AG04450 (cell line): ENCODE measurements at regions of chr2 and their contacts with region 1.

Region 1: GRCh38 chr2:234881413-234882241 is 70.2 kb upstream of the SH3BP4 start:
- DNase-seq: peak; percentile 92
- H3K4me3 ChIP-seq: peak overlapping the region; percentile 29
- H3K27ac ChIP-seq: peak overlapping the region; percentile 40
- H3K27me3 ChIP-seq: no peaks in the 10 kb centered on the region
- CTCF ChIP-seq: peak; percentile 89

Region 2: DNA sequence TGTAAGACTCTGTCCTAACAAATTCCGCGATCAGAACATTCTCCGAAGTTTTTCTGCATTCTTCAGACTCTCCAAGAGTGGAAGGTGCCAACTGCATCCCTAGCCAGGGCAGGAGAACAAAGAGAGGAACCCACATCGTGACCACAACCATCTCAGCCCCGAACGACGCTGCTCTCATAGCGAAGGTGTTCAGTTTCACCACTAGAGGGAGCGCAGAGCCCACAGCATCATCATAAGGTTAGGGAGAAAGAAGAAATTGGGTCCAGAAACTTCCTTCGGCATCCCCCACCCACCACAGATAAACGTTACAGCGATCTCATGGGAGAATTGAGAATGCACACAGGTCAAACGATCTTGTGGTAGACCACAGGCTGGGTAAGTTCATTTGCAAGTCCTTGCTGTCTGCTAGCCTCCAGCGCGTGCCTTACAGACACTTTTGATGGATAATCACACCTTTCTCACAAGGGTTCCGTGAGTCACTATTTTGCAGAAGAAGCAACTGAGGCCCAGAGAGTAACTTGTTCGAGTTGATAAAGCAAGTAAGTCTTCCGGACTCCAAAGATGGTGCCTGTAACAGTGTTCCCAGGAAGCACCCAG is 331.0 kb before region 1 on chr2:
- CTCF ChIA-PET with region 1: interaction called, 11 read pairs
- POLR2A ChIA-PET with region 1: no interaction called
- DNase-seq: peak; percentile 78
- H3K4me3 ChIP-seq: no peak overlapping the region
- H3K27ac ChIP-seq: no peak overlapping the region
- H3K27me3 ChIP-seq: no peaks in the 10 kb centered on the region
- CTCF ChIP-seq: peak; percentile 97

Region 3: GRCh38 chr2:234632527-234633391 is 248.9 kb before region 1 on chr2:
- CTCF ChIA-PET with region 1: interaction called, 4 read pairs
- POLR2A ChIA-PET with region 1: interaction called, 10 read pairs
- DNase-seq: peak; percentile 98
- H3K4me3 ChIP-seq: no peak overlapping the region
- H3K27ac ChIP-seq: peak overlapping the region; percentile 96
- H3K27me3 ChIP-seq: no peaks in the 10 kb centered on the region
- CTCF ChIP-seq: no peak

Region 4: DNA sequence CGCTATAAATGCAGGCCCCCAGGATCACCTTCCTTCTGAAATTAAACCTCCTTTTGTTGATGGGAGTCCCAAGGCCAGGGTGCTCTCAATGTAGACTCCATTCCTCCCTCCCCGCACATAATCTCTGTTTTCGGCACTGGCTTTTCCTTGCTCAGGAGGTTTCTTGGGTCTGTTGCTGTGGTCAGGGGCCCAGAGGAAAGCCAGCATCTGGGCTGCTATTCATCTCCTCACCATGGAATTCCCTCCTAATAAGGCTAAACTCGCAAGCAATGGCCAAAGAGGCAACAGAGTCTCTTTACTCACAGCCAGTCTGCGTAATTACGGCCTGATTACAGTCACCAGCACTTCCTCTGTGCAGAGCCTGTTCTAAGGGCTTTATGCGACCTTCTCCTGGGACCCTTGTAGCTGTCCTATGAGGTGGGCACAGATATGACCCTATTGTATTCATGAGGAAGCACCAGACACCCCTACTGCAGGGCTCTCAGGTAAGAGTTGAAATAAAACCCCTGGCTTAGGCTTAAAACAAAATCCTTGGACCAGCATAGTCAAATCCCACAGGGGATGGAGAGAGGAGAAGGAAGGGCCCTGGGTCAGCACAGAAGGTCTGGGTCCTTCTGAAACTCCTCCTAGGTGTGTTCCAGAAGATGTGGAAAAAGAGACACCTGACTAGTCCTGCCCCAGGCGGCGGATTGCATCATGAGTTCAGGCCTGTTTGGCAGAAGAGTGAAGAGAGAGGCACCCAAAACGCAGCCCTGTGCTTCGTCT is 34.8 kb before region 1 on chr2:
- CTCF ChIA-PET with region 1: no interaction called
- POLR2A ChIA-PET with region 1: no interaction called
- DNase-seq: no peak
- H3K4me3 ChIP-seq: no peak overlapping the region
- H3K27ac ChIP-seq: no peak overlapping the region
- H3K27me3 ChIP-seq: no peaks in the 10 kb centered on the region
- CTCF ChIP-seq: no peak

Region 5: DNA sequence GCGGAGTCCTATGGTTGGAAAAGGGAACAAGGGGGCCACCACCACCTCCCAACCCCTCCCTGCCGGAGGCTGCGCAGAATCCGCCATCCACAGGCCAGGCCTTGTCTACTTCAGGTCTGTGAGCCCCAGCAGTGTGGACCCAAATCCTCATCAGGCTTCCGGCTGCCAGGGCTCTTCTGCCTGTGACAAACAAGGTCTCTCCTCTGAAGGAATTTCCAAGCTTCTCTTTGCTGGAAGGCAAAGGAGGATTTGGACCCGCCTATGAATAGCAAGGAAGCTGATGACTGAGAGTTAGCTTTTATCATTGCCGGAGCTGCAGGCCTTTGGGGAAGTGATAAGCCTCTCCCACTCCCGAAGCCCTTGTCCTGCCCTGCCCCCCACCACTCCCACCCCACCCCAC is 23.5 kb before region 1 on chr2:
- CTCF ChIA-PET with region 1: interaction called, 17 read pairs
- POLR2A ChIA-PET with region 1: no interaction called
- DNase-seq: no peak
- H3K4me3 ChIP-seq: no peak overlapping the region
- H3K27ac ChIP-seq: no peak overlapping the region
- H3K27me3 ChIP-seq: no peaks in the 10 kb centered on the region
- CTCF ChIP-seq: no peak

Region 6: DNA sequence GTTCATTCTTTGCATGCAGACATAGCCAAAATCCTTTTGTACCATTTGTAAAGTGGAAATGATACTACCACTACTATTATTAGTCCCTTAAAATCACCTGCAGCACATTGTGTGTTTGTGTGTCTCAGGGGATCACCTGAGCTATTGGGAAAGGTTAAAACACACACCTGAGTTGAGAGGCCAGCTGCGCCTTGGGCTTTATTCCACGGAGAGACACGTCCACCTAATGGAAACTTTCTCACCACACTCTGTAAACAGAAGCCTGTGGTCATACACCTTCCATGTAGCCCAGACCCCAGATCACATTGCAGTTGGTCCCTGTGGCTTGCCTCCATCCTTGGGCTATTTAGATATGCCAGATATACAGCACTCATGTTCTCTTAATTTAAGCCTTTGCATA is 11.7 kb before region 1 on chr2:
- CTCF ChIA-PET with region 1: interaction called, 16 read pairs
- POLR2A ChIA-PET with region 1: no interaction called
- DNase-seq: no peak
- H3K4me3 ChIP-seq: no peak overlapping the region
- H3K27ac ChIP-seq: no peak overlapping the region
- H3K27me3 ChIP-seq: no peaks in the 10 kb centered on the region
- CTCF ChIP-seq: no peak

Region 7: DNA sequence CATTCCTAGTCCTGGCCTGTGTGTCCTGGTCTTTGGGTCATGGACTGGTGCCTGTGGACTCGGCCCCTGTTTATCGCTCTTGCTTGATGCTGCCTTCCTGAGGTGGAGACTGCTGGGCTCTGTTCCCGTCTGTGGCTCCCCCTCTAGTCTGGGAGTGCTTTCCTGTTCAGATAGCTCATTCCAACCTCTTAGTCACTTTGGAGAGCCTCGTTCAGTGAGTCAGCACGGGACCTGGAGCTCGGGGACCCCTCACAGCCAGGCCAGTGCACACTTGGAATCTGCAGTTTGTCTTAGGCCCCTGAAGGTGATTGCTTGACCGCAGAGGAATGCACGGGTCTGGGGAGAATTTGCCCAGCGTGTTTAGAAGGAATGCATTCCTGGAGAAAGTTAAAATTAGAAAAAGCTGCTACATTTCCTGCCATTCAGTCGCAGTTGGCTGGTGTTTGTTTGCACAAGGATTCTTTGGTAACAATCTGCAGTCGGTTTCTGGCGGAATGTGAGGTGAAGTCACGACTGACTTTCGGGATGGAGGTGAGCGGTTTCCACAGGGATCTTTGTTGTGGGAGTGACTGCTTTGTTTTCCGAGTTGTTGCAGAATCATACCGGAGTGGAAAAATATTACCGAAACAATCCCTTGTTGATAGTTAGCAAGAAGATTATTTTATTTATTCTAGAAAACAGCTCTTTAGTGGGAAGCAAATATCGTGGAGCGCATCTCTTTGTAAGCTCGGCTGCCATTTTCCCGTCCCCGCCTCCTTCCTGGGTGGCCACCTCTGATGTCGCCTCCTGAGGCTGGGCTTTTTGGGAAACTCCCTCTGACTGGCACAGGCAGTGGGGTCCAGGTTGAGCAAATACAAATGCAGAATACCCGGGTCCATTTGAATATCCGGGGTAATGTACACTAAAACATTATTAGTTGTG is 99.8 kb after region 1 on chr2:
- CTCF ChIA-PET with region 1: no interaction called
- POLR2A ChIA-PET with region 1: interaction called, 14 read pairs
- DNase-seq: peak; percentile 97
- H3K4me3 ChIP-seq: peak overlapping the region; percentile 39
- H3K27ac ChIP-seq: peak overlapping the region; percentile 93
- H3K27me3 ChIP-seq: no peaks in the 10 kb centered on the region
- CTCF ChIP-seq: peak; percentile 38

Region 8: DNA sequence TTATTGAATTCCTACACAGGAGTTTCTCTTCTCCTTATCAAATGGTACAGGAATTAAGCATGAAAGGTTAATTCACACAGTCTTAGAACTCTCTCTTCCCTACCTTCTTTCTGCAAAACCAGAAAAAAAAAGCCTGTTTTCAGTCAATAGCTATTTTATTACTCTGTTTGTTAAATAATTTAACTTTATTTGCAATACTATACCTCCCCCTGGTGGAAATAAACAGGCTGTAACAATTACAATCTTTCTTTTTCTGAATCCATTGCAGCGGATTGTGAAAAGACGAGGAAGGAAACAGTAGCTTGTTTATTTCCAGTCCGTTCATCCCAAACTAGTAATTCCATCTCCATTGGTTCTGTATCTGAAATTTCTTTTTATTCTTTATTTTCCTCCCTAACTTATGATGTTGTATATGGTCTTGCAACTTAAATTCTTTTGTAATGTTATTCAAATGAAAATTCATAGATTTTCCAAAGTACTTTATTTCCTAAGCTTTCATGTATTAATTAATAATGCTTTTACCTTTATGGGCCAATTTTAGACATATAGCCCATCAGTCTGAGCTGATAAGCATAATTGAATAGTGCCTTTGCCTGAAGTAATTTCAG is 235.4 kb after region 1 on chr2:
- CTCF ChIA-PET with region 1: interaction called, 10 read pairs
- POLR2A ChIA-PET with region 1: no interaction called
- DNase-seq: no peak
- H3K4me3 ChIP-seq: no peak overlapping the region
- H3K27ac ChIP-seq: no peak overlapping the region
- H3K27me3 ChIP-seq: no peaks in the 10 kb centered on the region
- CTCF ChIP-seq: peak; percentile 64